ENCODE measurements at regions of chr2 and their contacts with region 1.

Region 1: DNA sequence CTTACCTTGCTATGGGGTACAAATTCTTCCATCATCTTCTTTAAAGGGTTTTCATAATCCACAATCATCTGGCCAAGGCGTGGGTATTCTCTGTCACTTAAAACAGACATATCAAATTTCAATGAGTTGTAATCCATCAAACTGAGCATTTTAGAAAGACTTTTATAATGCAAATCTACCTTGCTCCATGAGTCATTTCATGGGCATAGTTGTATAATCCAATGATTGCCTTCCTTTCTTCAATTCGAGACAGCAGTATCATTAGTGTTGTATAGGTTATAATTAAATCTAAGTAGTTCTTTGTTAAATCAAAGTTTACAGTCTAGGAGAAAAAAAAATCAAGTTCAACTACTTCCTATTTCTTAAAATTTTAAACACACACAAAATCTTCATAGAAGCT is 36.3 kb downstream of the NCKAP1 start:
- DNase-seq: no peak
- H3K4me3 ChIP-seq: no peak overlapping the region
- H3K27ac ChIP-seq: no peak overlapping the region
- H3K4me1 ChIP-seq: no peaks in the 10 kb centered on the region
- CTCF ChIP-seq: no peak

Region 2: DNA sequence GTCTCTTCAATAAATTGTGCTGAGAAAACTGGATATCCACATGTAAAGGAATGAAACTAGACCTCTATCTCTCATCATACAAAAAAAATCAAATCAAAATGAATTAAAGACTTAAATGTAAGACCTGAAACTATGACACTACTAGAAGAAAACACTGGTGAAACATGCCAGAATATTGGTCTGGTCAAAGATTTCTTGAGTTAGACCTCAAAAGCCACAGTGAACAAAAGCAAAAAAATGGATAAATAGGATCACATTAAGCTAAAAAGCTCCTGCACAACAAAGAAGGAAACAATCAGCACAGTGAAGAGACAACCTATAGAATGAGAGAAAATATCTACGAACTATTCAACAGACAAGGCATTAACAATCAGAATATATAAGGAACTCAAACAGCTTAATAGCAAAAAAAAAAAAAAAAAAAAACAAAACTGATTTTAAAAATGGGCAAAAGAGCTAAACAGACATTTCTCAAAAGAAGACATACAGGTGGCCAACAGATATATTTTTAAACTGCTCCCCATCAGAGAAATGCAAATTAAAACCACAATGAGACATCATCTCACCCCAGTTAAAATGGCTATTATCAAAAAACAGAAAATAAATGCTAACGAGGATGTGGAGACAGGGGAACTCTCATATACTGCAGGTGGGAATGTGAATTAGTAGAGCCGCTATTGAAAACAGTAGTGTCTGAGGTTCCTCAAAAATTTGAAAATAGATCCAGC is 30.0 kb before region 1 on chr2:
- CTCF ChIA-PET with region 1: no interaction called
- POLR2A ChIA-PET with region 1: interaction called, 7 read pairs
- intact Hi-C with region 1: loop called (anchors 1 kb)
- DNase-seq: peak; percentile 39
- H3K4me3 ChIP-seq: no peak overlapping the region
- H3K27ac ChIP-seq: peak overlapping the region; percentile 71
- H3K4me1 ChIP-seq: peaks cover 47% of the 10 kb centered on the region
- CTCF ChIP-seq: no peak

Measured in OCI-LY7 (cell line).